B cell (primary cell): ENCODE measurements at regions of chr9 and their contacts with region 1.

Region 1: GRCh38 chr9:124537926-124538325 is 30.7 kb upstream of the NR5A1 start:
- DNase-seq: no peak
- ATAC-seq: no peak
- H3K4me3 ChIP-seq: no peak overlapping the region
- H3K4me3 Mint-ChIP-seq: no peak overlapping the region
- H3K27ac ChIP-seq: no peak overlapping the region
- H3K27ac Mint-ChIP-seq: no peak overlapping the region
- H3K4me1 ChIP-seq: no peaks in the 10 kb centered on the region
- H3K4me1 Mint-ChIP-seq: no peaks in the 10 kb centered on the region
- H3K27me3 ChIP-seq: no peaks in the 10 kb centered on the region
- H3K27me3 Mint-ChIP-seq: no peaks in the 10 kb centered on the region
- CTCF ChIP-seq: no peak

Region 2: GRCh38 chr9:124527781-124528180 is 10.1 kb before region 1 on chr9:
- CTCF ChIA-PET with region 1: interaction called, 13 read pairs
- POLR2A ChIA-PET with region 1: no interaction called
- intact Hi-C with region 1: no loop called
- DNase-seq: no peak
- ATAC-seq: no peak
- H3K4me3 ChIP-seq: no peak overlapping the region
- H3K4me3 Mint-ChIP-seq: no peak overlapping the region
- H3K27ac ChIP-seq: no peak overlapping the region
- H3K27ac Mint-ChIP-seq: no peak overlapping the region
- H3K4me1 ChIP-seq: no peaks in the 10 kb centered on the region
- H3K4me1 Mint-ChIP-seq: no peaks in the 10 kb centered on the region
- H3K27me3 ChIP-seq: no peaks in the 10 kb centered on the region
- H3K27me3 Mint-ChIP-seq: no peaks in the 10 kb centered on the region
- CTCF ChIP-seq: no peak

Region 3: DNA sequence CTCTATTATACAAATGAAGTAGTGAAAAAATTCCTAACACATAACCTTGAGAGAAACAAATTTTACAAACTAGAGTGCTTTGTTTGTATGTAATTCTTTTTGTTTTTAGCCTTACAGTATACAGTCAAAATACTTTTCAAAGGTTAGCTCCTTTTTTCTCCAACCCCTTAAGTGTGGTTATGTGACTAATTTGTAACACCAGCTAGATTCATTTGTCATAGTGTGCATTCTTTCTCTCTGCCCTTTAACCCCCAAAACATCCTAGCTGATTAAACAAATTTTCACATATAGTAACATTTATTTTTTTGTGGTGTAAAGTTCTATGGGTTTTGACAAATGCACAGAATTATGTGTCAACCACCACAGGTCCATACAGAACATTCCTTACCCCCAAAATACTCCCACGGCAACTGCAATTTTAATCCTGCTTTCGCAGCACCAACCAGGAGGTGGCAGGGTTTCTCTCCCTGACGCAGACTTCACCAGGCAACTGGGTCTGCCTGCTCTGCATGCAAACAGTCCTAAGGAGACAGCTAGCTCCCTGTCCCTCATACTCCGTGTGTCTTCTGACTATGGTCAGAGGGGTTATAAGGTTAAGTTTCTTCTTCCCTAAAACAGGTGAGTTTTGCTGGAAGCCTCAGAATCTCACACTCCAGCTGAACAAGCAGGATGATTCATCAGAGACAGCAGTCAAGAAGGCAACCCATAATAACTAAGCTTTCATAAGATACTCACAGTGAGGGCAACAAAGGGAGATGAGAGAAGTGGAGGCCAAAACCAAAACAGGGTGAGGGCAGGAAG is 13.7 kb after region 1 on chr9:
- CTCF ChIA-PET with region 1: interaction called, 22 read pairs
- POLR2A ChIA-PET with region 1: no interaction called
- intact Hi-C with region 1: no loop called
- DNase-seq: no peak
- ATAC-seq: no peak
- H3K4me3 ChIP-seq: no peak overlapping the region
- H3K4me3 Mint-ChIP-seq: no peak overlapping the region
- H3K27ac ChIP-seq: no peak overlapping the region
- H3K27ac Mint-ChIP-seq: no peak overlapping the region
- H3K4me1 ChIP-seq: no peaks in the 10 kb centered on the region
- H3K4me1 Mint-ChIP-seq: no peaks in the 10 kb centered on the region
- H3K27me3 ChIP-seq: no peaks in the 10 kb centered on the region
- H3K27me3 Mint-ChIP-seq: peaks cover 3% of the 10 kb centered on the region
- CTCF ChIP-seq: peak; percentile 20